ENCODE measurements at regions of chr9 and their contacts with region 1.

Region 1: GRCh38 chr9:33737811-33738606 is 57.4 kb upstream of the PRSS3 start:
- DNase-seq: peak; percentile 45
- H3K4me3 Mint-ChIP-seq: no peak overlapping the region
- H3K27ac Mint-ChIP-seq: no peak overlapping the region
- H3K4me1 Mint-ChIP-seq: no peaks in the 10 kb centered on the region
- H3K27me3 Mint-ChIP-seq: peaks cover 39% of the 10 kb centered on the region

Region 2: GRCh38 chr9:33778700-33779351 is 40.8 kb after region 1 on chr9:
- CTCF ChIA-PET with region 1: interaction called, 12 read pairs
- DNase-seq: peak; percentile 64
- H3K4me3 Mint-ChIP-seq: no peak overlapping the region
- H3K27ac Mint-ChIP-seq: no peak overlapping the region
- H3K4me1 Mint-ChIP-seq: peaks cover 2% of the 10 kb centered on the region
- H3K27me3 Mint-ChIP-seq: peaks cover 13% of the 10 kb centered on the region